Activated T-helper 1 cell treated with anti-CD3 and anti-CD28 coated beads, Interleukin-12 subunit alpha, Interleukin-12 subunit beta, Interleukin-2, Interleukin-4 antibody, amounts not matched to agents 30 ng/mL and 10 ng/mL and 1 ng/mL, durations not matched to agents 14 hours and 24 hours and 36 hours (primary cell): ENCODE measurements at regions of chr21 and their contacts with region 1.

Region 1: GRCh38 chr21:46228345-46229051 is at the start of gene LSS:
- DNase-seq: peak; percentile 97
- H3K4me3 Mint-ChIP-seq: peak within 1 kb of the TSS; percentile 92
- H3K27ac Mint-ChIP-seq: peak within 1 kb of the TSS; percentile 99
- H3K4me1 Mint-ChIP-seq: peaks cover 60% of the 10 kb centered on the region
- H3K27me3 Mint-ChIP-seq: no peaks in the 10 kb centered on the region
- total RNA-seq, gene LSS: 15.8 and 17.0 TPM in 2 replicates

Region 2: GRCh38 chr21:46144464-46145070 is 83.9 kb before region 1 on chr21:
- intact Hi-C with region 1: loop called (anchors 1 kb)
- DNase-seq: no peak
- H3K4me3 Mint-ChIP-seq: no peak overlapping the region
- H3K27ac Mint-ChIP-seq: peak overlapping the region; percentile 70
- H3K4me1 Mint-ChIP-seq: peaks cover 8% of the 10 kb centered on the region
- H3K27me3 Mint-ChIP-seq: no peaks in the 10 kb centered on the region

Region 3: GRCh38 chr21:46184625-46185555 is 43.6 kb before region 1 on chr21:
- intact Hi-C with region 1: loop called (anchors 1 kb)
- DNase-seq: peak; percentile 72
- H3K4me3 Mint-ChIP-seq: peak overlapping the region; percentile 85
- H3K27ac Mint-ChIP-seq: peak overlapping the region; percentile 71
- H3K4me1 Mint-ChIP-seq: no peaks in the 10 kb centered on the region
- H3K27me3 Mint-ChIP-seq: no peaks in the 10 kb centered on the region

Region 4: GRCh38 chr21:46273341-46273740 is 44.8 kb after region 1 on chr21:
- intact Hi-C with region 1: no loop called
- DNase-seq: no peak
- H3K4me3 Mint-ChIP-seq: no peak overlapping the region
- H3K27ac Mint-ChIP-seq: no peak overlapping the region
- H3K4me1 Mint-ChIP-seq: no peaks in the 10 kb centered on the region
- H3K27me3 Mint-ChIP-seq: no peaks in the 10 kb centered on the region

Region 5: DNA sequence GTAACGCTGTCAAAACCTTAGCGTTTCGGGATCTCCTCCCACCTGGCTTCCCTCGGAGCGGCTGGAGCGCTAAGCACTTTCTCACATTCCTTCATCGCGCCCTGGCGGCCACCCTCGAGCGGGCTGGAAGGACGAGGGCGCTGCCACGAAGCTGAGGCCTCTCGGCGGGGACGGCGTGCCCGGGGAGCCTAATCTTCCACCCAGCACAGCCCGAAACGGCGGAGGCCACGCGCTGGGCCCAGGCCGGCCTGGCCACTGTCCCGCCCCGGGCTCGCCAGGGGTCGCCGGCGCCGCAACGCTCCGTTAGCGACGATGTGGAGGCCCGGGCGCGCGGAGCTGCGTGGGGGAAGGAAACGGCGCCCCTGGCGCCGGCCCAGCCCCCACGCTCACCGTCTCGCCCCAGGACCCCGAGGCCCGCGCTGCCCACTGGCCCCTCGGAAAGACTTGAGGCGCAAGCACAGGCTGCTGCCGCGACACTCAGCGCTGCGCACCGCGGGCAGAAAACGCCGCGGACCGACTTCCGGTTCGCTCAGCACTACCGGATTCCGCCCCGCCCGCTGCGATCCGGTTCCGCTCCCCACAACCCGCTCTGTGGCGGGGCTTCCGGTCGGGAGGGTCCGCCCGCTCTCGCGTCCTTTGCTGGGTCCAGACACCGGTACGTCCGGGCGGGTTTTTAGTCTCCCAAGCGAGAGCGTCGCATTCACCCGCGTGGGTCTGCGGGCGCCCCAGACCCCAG is 57.4 kb after region 1 on chr21 and contains the start of gene YBEY:
- intact Hi-C with region 1: loop called (anchors 1 kb)
- DNase-seq: peak; percentile 86
- H3K4me3 Mint-ChIP-seq: peak within 1 kb of the TSS; percentile 100
- H3K27ac Mint-ChIP-seq: peak within 1 kb of the TSS; percentile 99
- H3K4me1 Mint-ChIP-seq: peaks cover 45% of the 10 kb centered on the region
- H3K27me3 Mint-ChIP-seq: no peaks in the 10 kb centered on the region
- total RNA-seq, gene YBEY: 16.7 and 17.6 TPM in 2 replicates

Region 6: GRCh38 chr21:46458315-46459023 is 230.0 kb after region 1 on chr21 and contains the start of gene DIP2A:
- intact Hi-C with region 1: loop called (anchors 2 kb)
- DNase-seq: peak; percentile 95
- H3K4me3 Mint-ChIP-seq: peak within 1 kb of the TSS; percentile 91
- H3K27ac Mint-ChIP-seq: peak within 1 kb of the TSS; percentile 91
- H3K4me1 Mint-ChIP-seq: peaks cover 43% of the 10 kb centered on the region
- H3K27me3 Mint-ChIP-seq: no peaks in the 10 kb centered on the region
- total RNA-seq, gene DIP2A: 33.5 and 33.6 TPM in 2 replicates